ENCODE measurements at regions of chr11 and their contacts with region 1.

Region 1: GRCh38 chr11:10275714-10276113 is 18.3 kb downstream of the SBF2 start:
- DNase-seq: no peak
- ATAC-seq: no peak
- H3K4me3 ChIP-seq: no peak overlapping the region
- H3K27ac ChIP-seq: peak overlapping the region; percentile 5; the same call in 1 of the 2 replicates
- H3K4me1 ChIP-seq: peaks cover 12% of the 10 kb centered on the region
- H3K27me3 ChIP-seq: no peaks in the 10 kb centered on the region
- CTCF ChIP-seq: no peak

Region 2: GRCh38 chr11:9861860-9862725 is 413.6 kb before region 1 on chr11:
- CTCF ChIA-PET with region 1: no interaction called
- POLR2A ChIA-PET with region 1: interaction called, 12 read pairs
- in situ Hi-C with region 1: no loop called
- intact Hi-C with region 1: no loop called
- DNase-seq: peak; percentile 74
- ATAC-seq: peak; percentile 91
- H3K4me3 ChIP-seq: no peak overlapping the region
- H3K27ac ChIP-seq: peak overlapping the region; percentile 96
- H3K4me1 ChIP-seq: peaks cover 56% of the 10 kb centered on the region
- H3K27me3 ChIP-seq: no peaks in the 10 kb centered on the region
- CTCF ChIP-seq: peak; percentile 97

Region 3: DNA sequence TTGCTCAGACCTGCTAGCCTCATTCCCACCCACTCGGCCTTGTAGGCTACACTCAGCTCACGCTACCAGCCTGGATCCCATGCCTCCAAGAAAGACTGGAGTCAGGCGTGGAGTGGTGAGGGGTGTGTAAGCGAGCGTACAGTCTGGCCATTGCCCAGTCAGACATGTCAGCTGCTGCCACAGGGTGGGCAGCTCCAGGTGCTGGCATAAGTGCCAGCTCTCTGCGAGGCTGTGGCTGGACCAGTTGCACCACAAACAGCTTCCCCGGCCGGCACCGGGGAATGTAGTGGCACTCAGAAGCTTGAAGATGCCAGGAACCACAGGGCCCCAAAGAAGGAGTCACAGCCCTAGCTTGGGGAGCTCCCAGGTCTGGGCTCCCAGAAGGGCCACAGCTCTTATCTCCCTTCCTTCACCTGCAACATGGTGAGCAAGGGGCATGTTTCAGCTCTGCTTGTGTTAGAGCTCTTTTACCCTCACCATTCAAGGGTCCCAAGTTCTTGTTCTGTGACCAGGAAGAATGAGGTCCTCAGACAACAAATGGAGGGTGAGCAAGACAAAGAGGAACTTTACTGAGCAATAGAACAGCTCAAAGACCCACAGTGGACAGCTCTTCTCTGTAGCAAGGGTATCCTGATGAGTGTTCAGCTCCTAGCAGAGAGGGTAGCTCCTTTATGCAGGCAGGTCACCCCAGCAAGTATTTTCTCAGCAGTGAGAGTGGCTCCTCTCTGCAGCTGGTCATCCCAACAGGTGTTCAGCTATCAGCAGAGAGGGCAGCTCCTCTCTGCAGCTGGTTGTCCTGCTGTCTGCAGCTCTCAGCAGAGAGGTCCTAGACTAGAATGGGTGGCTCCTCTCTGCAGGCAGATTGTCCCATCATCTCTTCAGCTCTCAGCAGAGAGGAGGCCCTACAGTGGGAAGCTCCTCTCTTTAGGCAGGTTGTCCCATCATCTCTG is 12.3 kb after region 1 on chr11:
- CTCF ChIA-PET with region 1: no interaction called
- POLR2A ChIA-PET with region 1: interaction called, 16 read pairs
- in situ Hi-C with region 1: no loop called
- intact Hi-C with region 1: no loop called
- DNase-seq: no peak
- ATAC-seq: peak; percentile 24
- H3K4me3 ChIP-seq: no peak overlapping the region
- H3K27ac ChIP-seq: no peak overlapping the region
- H3K4me1 ChIP-seq: peaks cover 33% of the 10 kb centered on the region
- H3K27me3 ChIP-seq: no peaks in the 10 kb centered on the region
- CTCF ChIP-seq: no peak

Region 4: DNA sequence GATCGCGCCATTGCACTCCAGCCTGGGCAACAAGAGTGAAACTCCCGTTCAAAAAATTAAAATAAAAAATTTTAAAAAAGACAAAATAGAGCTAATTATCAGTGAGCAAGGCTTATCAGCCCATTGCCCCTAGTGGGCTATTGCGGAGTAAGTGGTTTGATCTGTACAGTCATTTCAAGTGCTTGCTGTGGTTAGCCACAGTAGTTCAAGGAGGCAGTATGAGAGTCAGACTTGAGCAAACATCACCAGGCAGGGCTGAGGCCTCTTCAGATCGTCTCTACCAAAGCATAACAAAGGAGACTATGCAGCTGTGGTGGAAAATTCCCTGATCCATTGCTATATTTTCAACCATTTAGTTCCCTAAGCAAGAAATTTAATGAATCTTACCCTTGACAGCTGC is 22.6 kb after region 1 on chr11:
- CTCF ChIA-PET with region 1: interaction called, 5 read pairs
- POLR2A ChIA-PET with region 1: interaction called, 12 read pairs
- in situ Hi-C with region 1: no loop called
- intact Hi-C with region 1: no loop called
- DNase-seq: no peak
- ATAC-seq: no peak
- H3K4me3 ChIP-seq: no peak overlapping the region
- H3K27ac ChIP-seq: peak overlapping the region; percentile 24; the same call in 1 of the 2 replicates
- H3K4me1 ChIP-seq: peaks cover 40% of the 10 kb centered on the region
- H3K27me3 ChIP-seq: no peaks in the 10 kb centered on the region
- CTCF ChIP-seq: peak; percentile 40

Region 5: GRCh38 chr11:10476927-10477689 is 201.4 kb after region 1 on chr11:
- CTCF ChIA-PET with region 1: no interaction called
- POLR2A ChIA-PET with region 1: no interaction called
- in situ Hi-C with region 1: no loop called
- intact Hi-C with region 1: no loop called
- DNase-seq: no peak
- ATAC-seq: 0 out of 2 replicates have a peak, but pooled peaks have one; percentile 26
- H3K4me3 ChIP-seq: no peak overlapping the region
- H3K27ac ChIP-seq: no peak overlapping the region
- H3K4me1 ChIP-seq: no peaks in the 10 kb centered on the region
- H3K27me3 ChIP-seq: no peaks in the 10 kb centered on the region
- CTCF ChIP-seq: no peak

Measured in Panc1 (cell line).